ENCODE measurements at regions of chr11 and their contacts with region 1.

Region 1: DNA sequence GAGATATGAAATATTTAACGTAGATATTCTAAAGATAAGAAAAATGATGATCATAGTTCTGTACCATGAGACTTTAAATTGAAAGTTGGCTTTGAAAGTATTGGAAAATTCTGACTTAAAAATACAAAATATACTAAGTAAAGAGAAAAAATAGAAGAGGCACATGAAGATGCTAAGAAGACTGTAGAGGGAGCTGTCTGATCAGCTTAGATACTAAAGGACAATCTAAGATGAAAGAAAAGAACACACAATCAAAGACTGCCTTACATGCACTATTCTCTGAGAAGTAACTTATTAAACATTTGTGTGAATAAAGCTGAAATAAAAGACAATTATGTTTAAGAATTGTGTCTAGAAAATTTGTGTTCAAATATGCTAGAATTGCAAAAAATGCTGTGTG is 55.1 kb downstream of the RBMXL2 start:
- DNase-seq: peak in 2 of 42 donors; percentile 5 to 19

Region 2: DNA sequence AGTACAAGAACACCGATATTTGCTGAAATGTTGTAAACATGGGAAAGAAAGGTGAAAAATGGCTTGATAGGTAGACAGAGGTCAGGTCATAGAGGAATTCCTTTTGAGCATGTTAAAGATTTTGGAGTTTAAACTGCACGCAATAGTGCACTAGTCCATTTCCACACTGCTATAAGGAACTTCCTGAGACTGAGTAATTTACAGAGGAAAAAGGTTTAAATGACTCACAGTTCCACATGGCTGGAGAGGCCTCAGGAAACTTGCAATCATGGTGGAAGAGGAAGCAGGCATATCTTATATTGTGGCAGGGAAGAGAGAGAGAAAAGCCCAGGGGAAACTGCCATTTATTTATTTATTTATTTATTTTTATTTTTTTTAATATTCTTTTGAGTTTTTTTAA is 293.4 kb before region 1 on chr11:
- intact Hi-C with region 1: no loop called
- DNase-seq: no peak

Region 3: GRCh38 chr11:7098235-7098832 is 45.6 kb before region 1 on chr11:
- intact Hi-C with region 1: no loop called
- DNase-seq: peak in 3 of 42 donors; percentile 8 to 46 (median 10)

Region 4: GRCh38 chr11:7442588-7443215 is 298.8 kb after region 1 on chr11:
- intact Hi-C with region 1: loop called (anchors 10 kb)
- DNase-seq: peak; percentile 28 to 95 (median 86)

Measured in head of caudate nucleus (tissue), 42 donors.